Aorta (tissue), 5 donors: ENCODE measurements at regions of chr3 and their contacts with region 1.

Region 1: GRCh38 chr3:69691860-69692259 is 47.4 kb upstream of the MITF start:
- DNase-seq: no peak
- ATAC-seq: no peak
- H3K4me3 ChIP-seq: no peak overlapping the region
- H3K27ac ChIP-seq: no peak overlapping the region
- H3K4me1 ChIP-seq: no peaks in the 10 kb centered on the region
- H3K27me3 ChIP-seq: no peaks in the 10 kb centered on the region

Region 2: DNA sequence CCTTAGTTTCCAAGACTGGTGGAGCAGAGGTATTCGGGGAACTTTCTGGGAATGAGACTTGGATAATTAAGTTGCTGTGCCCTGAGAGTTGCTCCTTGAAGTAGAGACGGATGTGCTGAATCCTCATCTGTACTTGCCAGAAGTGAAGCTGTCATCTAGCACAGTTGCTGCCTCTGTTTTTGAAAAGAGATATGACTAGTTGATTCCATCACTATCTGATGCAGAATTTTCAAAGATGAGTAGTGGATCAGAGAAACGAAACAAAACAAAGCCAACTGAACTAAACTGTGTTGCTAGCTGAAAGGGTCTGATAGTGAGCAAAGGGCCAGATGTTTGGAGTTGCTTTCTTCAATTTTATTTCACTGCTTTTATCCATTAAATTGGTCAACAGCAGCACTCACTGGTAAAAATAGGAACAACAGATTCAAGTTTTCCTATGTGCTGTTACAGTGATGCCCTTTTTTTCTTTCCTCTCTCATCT is 100.1 kb after region 1 on chr3:
- intact Hi-C with region 1: loop called (anchors 2 to 5 kb)
- DNase-seq: no peak
- ATAC-seq: peak; percentile 80
- H3K4me3 ChIP-seq: no peak overlapping the region
- H3K27ac ChIP-seq: no peak overlapping the region
- H3K4me1 ChIP-seq: peaks cover 6% of the 10 kb centered on the region in 2 donors
- H3K27me3 ChIP-seq: no peaks in the 10 kb centered on the region

Region 3: DNA sequence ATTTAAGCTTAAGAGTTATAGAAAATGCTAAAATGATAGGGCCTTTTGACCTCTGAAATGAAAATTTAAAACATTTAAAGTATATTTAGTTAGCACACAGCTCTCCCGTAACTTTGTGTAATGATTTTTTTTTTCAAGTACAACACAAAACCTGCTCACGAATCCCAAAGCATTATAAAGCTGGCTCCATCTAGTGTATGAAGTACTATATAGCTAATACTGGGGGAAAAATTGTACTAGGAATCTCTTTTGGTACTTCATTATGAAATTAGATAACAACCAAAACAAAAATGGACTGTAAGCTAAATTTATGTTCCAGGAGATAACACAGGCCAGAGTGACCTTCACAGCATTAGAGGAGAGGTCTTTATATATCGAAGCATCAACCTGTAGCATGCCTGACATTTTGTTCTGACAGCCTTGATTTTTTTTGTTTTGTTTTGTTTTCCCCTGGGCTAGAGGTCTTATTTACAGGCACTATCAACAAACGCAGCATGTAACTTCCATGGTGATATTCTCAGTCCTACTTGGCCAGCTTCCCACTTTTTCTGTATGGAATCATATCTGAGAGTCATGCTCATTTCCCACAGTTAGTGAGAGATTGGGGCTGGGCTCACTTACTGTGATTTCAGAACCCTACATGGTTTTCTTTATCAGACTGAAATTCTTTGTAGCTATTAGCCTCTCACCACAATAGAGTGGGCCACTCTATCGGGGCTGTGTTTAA is 163.7 kb after region 1 on chr3:
- intact Hi-C with region 1: loop called in 1 of 2 experiments (anchors 2 kb)
- DNase-seq: no peak
- ATAC-seq: no peak
- H3K4me3 ChIP-seq: no peak overlapping the region
- H3K27ac ChIP-seq: no peak overlapping the region
- H3K4me1 ChIP-seq: peaks cover 2 to 5% of the 10 kb centered on the region in 2 donors
- H3K27me3 ChIP-seq: no peaks in the 10 kb centered on the region

Region 4: DNA sequence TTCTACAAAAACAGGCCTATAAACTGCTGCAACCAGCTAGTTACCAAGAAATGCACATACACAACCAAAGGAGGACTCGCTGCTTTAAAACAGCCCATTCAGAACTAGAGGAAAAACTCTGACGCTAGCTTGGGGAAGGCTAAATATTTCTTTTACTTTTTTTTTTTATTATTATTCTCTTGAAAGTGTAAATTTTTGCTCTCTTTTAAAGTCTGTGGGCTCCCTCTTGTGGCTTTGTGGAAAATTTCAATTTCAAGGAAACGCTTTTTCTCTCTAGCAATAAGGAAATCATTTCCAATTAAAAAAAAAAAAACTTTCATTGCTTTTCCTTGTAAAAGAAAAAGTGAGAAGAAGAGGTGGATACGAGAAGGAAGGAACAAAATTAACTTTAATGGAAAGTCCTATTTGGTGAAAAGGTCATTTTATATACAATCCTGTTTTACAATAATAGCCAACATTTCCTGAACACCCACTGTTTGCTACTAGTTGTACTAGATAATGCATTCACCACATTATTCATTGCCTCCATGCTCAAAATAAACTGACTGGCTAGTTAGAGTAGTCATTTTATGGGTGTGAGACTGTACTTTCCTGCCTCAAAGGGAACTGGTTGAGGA is 256.5 kb after region 1 on chr3:
- intact Hi-C with region 1: loop called (anchors 2 to 5 kb)
- DNase-seq: no peak
- ATAC-seq: peak; percentile 65
- H3K4me3 ChIP-seq: no peak overlapping the region
- H3K27ac ChIP-seq: no peak overlapping the region
- H3K4me1 ChIP-seq: peaks cover 0 to 1% of the 10 kb centered on the region in 2 donors
- H3K27me3 ChIP-seq: no peaks in the 10 kb centered on the region